ENCODE measurements at regions of chr2 and their contacts with region 1.

Region 1: GRCh38 chr2:135473567-135473966 is 57.5 kb downstream of the ZRANB3 start:
- DNase-seq: peak; percentile 55
- H3K4me3 ChIP-seq: no peak overlapping the region
- H3K27ac ChIP-seq: no peak overlapping the region
- H3K4me1 ChIP-seq: no peaks in the 10 kb centered on the region
- CTCF ChIP-seq: peak; percentile 87

Region 2: DNA sequence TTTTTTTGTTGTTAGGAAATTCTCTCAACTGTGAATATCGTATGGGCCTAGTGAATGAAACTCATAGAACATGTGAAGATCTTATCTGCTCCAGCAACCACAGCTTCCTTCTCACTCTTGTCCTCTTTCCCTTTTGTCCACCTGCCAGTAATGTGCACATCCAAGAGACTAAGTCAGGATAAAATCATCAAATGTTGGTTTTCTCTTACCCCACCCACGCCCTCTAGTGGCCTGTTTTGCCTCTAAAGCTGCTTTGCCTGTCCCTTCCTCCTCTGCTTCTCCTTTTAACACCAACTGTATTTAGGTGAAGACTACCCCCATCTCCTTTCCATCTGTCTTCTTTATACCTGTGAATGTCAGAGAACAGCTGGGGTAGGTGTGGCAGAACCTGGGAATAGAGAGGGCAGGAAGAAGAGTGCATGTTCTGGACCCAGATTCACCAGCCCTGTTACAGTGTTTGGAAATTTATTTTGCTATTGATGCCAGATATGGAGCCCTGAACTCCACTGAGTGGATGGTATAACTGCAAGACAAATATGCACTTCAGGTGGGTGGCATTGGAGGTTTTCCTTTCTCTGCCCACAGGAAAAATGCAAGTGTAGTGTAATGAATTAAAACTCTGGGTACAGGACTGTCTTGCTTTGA is 1228.1 kb before region 1 on chr2:
- CTCF ChIA-PET with region 1: no interaction called
- POLR2A ChIA-PET with region 1: no interaction called
- intact Hi-C with region 1: no loop called
- DNase-seq: peak; percentile 88
- H3K4me3 ChIP-seq: peak overlapping the region; percentile 24
- H3K27ac ChIP-seq: peak overlapping the region; percentile 63
- H3K4me1 ChIP-seq: peaks cover 78% of the 10 kb centered on the region
- CTCF ChIP-seq: peak; percentile 92

Region 3: GRCh38 chr2:135600915-135601314 is 127.3 kb after region 1 on chr2:
- CTCF ChIA-PET with region 1: no interaction called
- POLR2A ChIA-PET with region 1: no interaction called
- intact Hi-C with region 1: loop called (anchors 1 kb)
- DNase-seq: peak; percentile 12
- H3K4me3 ChIP-seq: no peak overlapping the region
- H3K27ac ChIP-seq: no peak overlapping the region
- H3K4me1 ChIP-seq: no peaks in the 10 kb centered on the region
- CTCF ChIP-seq: peak; percentile 54

Region 4: GRCh38 chr2:135709992-135710391 is 236.4 kb after region 1 on chr2:
- CTCF ChIA-PET with region 1: no interaction called
- POLR2A ChIA-PET with region 1: interaction called, 8 read pairs
- intact Hi-C with region 1: loop called (anchors 1 kb)
- DNase-seq: peak; percentile 61
- H3K4me3 ChIP-seq: no peak overlapping the region
- H3K27ac ChIP-seq: no peak overlapping the region
- H3K4me1 ChIP-seq: no peaks in the 10 kb centered on the region
- CTCF ChIP-seq: peak; percentile 99

Region 5: DNA sequence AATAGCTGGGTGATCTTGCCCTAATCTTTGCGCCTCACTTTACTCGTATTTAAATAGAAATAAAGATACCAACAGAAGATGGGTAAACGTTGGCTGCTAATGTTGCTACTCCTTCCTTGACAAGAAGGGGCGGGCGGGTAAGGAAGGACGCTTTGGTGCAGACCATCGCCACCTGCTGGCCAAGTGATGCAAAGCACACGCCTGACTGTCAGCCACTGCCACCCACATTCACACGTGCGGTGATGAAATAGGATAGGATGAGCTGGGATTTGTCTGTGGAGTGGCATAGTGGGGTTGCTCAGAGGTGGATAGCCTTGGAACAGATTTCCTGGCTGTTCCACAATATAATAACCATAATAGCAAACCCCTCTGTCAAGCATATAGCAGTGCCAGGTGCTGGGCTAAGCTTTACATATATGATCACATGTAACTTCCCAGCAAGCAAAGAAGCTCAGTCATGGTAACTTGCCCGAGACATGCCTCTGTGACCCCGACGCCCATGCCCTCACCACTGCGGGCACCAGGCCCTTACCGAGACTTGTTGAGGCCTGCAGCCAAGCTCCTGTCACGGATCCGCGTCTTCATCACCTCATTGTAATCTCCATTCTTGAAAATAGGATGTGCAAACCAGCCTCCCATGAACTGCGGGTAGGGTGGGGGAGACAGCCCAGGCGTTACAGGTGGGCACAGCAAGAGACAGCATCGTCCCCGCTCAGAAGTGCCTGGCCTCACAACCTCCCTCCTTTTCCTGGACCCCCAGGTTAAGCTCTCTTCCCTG is 324.1 kb after region 1 on chr2:
- CTCF ChIA-PET with region 1: no interaction called
- POLR2A ChIA-PET with region 1: no interaction called
- intact Hi-C with region 1: loop called (anchors 5 kb)
- DNase-seq: peak; percentile 83
- H3K4me3 ChIP-seq: no peak overlapping the region
- H3K27ac ChIP-seq: no peak overlapping the region
- H3K4me1 ChIP-seq: peaks cover 9% of the 10 kb centered on the region
- CTCF ChIP-seq: peak; percentile 95

Measured in OCI-LY7 (cell line).